ENCODE measurements at regions of chr2 and their contacts with region 1.

Region 1: GRCh38 chr2:96509114-96509846 is 4.1 kb upstream of the NEURL3 start:
- DNase-seq: peak; percentile 82 to 91
- ATAC-seq: peak; percentile 78

Region 2: DNA sequence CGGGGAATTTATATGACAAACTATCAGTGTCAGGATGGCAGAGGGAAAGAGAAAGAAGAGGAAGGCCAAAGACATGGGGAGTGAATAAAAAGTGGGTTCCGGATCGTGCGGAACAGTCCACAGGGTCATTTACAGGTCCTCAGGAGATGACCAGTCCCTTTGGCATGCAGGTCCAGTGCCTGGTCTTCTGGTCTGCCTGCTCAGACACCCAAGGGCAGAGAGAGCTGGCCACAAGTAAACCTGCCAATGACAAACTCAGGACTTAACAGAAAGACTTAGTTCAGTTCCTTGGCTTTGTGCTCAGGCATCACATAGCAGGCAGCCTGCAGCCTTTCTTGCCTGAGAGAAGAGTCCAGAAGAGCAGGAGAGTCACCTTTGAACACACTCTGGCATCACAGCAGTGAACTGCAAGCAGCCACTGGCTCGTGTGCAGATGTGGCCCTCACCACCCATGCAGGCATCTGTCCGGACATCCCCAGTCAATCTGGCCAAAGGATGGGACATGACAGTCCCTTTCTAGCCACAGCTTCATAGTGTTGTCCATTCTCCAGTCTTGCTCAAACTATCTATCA is 257.5 kb before region 1 on chr2:
- intact Hi-C with region 1: no loop called
- DNase-seq: no peak
- ATAC-seq: peak; percentile 12

Region 3: DNA sequence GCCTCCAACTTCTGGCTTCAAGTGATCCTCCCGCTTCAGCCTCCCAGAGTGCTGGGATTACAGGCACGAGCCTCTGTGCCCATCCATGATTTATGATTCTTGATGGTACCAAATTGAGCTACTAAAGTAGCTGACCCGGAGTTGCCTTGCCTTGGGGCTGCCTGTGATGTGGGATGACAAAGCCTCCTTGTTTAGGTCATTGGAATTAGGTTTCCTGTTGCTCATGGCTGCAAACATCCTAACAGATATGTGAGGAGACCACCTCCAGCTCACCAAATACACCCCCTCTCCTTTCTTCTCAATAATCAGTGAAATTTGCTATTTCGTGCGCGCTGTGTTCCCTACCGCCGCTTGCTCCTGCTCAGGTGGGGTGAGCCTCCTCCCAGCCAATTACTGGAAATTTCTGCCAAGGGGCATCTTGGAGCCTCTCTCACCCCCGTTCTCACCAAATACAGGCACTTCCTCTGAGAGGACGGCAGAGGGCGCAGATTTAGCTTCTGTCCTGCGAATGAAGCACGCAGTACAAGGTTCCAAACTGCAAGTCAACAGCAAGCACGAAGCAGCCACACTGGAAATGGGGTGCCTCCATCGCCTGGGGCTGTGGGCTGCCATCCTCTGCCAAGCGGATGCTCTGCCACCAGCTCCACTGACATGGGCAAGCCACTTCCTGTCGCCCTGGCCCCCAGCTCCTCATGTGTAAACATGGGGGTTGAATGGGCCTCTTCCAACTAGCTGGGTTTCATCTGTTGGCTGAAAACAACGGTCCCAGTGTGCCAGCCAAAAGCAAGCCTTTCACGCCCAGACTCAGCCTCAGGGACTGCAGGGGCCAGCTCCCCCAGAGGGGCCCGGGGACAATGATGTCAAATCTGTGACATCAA is 102.0 kb before region 1 on chr2:
- intact Hi-C with region 1: loop called (anchors 5 to 10 kb)
- DNase-seq: peak; percentile 56 to 57
- ATAC-seq: peak; percentile 61

Region 4: GRCh38 chr2:96427917-96428316 is 81.4 kb before region 1 on chr2:
- intact Hi-C with region 1: no loop called
- DNase-seq: no peak
- ATAC-seq: no peak

Measured in left colon (tissue), 2 donors.